ENCODE measurements at regions of chr9 and their contacts with region 1.

Region 1: DNA sequence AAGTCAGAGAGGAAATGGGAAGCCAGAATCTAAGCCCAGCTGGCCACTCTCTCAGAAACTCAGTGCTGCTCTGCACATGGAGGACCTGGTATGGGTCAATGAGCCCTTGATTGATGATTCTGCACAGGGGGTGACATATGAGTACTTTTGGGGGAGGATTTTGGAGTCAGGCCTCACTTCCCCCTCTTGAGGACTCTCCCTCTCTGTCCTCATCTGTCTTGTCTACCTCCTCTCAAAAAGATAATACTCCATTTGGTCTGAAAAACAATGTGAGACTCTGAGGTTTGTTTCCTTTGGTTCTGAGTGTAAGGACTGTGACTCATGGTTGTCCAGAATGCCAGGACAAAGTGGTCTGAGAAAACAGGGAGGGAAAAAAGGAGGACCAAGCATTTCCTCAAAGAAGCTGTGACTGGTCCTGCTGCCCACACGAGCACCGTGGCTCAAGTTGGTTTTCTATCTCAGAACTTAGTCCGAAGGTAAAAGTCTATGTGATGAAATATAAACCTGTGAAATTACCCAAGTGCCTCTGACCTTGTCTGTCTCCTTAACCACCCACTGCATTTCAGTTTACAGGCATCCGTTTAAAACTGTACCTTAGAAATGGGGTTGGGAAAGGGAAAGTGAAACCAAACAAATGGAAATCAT is 11.1 kb downstream of the TTC39B start:
- DNase-seq: peak; percentile 40
- H3K4me3 Mint-ChIP-seq: peak overlapping the region; percentile 63
- H3K27ac Mint-ChIP-seq: peak overlapping the region; percentile 95
- H3K4me1 Mint-ChIP-seq: peaks cover 86% of the 10 kb centered on the region
- H3K27me3 Mint-ChIP-seq: no peaks in the 10 kb centered on the region

Region 2: DNA sequence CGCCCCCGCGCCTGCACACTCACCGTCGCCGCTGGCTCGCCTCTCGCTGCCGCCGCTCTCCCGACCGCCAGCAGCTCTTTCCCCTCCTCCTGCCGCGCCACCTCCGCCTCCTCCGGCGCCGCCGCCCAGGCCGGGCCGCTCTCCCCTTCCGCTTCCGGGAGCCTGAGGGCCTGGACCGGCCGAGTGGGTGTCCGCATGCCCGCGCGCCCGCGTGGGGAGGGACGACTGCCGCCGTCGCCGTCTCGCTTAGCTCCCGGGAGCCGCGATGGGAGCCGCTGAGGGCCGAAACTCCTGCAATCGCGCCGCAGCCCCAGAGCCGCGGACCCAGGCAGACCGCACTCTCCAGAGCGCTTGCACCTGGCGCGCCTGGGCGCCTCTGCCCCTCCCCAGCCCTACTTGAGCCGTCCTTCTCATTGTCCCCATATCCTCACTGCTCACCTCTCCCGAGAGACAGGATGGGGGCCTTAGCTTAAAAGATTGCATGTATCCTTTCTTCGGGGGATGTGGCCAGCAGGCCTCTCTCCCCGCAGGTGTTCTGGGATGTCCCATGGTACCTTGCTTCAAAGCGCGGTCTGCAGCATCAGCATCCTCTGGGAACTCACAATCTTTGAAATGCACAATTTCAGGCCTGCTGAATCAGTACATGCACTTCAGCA is 602.5 kb before region 1 on chr9 and contains the start of gene ZDHHC21:
- CTCF ChIA-PET with region 1: no interaction called
- intact Hi-C with region 1: loop called (anchors 10 kb)
- DNase-seq: peak; percentile 62
- H3K4me3 Mint-ChIP-seq: peak within 1 kb of the TSS; percentile 89
- H3K27ac Mint-ChIP-seq: peak within 1 kb of the TSS; percentile 79
- H3K4me1 Mint-ChIP-seq: peaks cover 31% of the 10 kb centered on the region
- H3K27me3 Mint-ChIP-seq: peaks cover 8% of the 10 kb centered on the region
- total RNA-seq, gene ZDHHC21: 3.5 to 3.8 TPM

Region 3: GRCh38 chr9:14806941-14807520 is 488.9 kb before region 1 on chr9:
- CTCF ChIA-PET with region 1: no interaction called
- intact Hi-C with region 1: no loop called
- DNase-seq: no peak
- H3K4me3 Mint-ChIP-seq: no peak overlapping the region
- H3K27ac Mint-ChIP-seq: no peak overlapping the region
- H3K4me1 Mint-ChIP-seq: no peaks in the 10 kb centered on the region
- H3K27me3 Mint-ChIP-seq: peaks cover 2% of the 10 kb centered on the region

Region 4: DNA sequence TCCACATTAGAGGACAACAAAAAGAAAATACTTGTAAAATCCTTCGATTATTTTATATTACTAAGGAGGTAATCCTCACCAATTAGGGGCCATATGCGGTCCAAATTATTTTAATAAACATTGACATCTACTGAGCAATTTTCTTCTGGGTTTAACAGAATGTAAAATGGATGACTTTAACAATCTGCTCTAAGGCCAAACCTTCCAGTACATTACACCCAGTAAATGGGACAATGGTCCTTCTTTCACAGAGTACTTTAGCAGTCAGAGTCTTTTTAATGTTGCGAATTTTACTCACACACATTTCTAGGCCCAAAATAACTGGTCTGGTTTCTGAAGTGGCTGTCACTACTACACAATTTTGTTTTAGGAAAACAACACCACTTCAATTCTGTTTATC is 95.8 kb before region 1 on chr9:
- CTCF ChIA-PET with region 1: no interaction called
- intact Hi-C with region 1: no loop called
- DNase-seq: no peak
- H3K4me3 Mint-ChIP-seq: no peak overlapping the region
- H3K27ac Mint-ChIP-seq: no peak overlapping the region
- H3K4me1 Mint-ChIP-seq: no peaks in the 10 kb centered on the region
- H3K27me3 Mint-ChIP-seq: no peaks in the 10 kb centered on the region

Region 5: GRCh38 chr9:15211160-15211814 is 84.6 kb before region 1 on chr9:
- CTCF ChIA-PET with region 1: interaction called, 10 read pairs
- intact Hi-C with region 1: no loop called
- DNase-seq: peak; percentile 69
- H3K4me3 Mint-ChIP-seq: no peak overlapping the region
- H3K27ac Mint-ChIP-seq: no peak overlapping the region
- H3K4me1 Mint-ChIP-seq: peaks cover 14% of the 10 kb centered on the region
- H3K27me3 Mint-ChIP-seq: no peaks in the 10 kb centered on the region

Region 6: DNA sequence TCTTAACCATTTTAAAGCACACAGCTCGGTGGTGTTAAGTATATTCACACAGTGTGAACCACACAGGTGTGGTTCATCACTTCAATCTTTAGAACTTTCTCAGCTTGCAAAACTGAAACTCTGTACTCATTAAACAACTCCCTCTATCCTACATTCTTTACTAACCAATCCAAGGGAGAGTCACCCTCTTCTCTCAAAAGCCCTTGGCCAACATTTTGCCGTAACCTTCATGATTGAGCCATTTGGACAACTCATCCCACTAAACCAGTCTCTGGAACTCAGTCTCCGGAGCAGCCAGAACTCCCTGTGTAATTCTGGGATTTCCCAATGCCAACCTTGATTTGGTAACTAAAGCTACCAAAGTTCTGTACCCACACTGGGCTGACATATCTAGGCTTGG is 73.6 kb before region 1 on chr9:
- CTCF ChIA-PET with region 1: no interaction called
- intact Hi-C with region 1: no loop called
- DNase-seq: no peak
- H3K4me3 Mint-ChIP-seq: no peak overlapping the region
- H3K27ac Mint-ChIP-seq: no peak overlapping the region
- H3K4me1 Mint-ChIP-seq: peaks cover 29% of the 10 kb centered on the region
- H3K27me3 Mint-ChIP-seq: no peaks in the 10 kb centered on the region

Region 7: DNA sequence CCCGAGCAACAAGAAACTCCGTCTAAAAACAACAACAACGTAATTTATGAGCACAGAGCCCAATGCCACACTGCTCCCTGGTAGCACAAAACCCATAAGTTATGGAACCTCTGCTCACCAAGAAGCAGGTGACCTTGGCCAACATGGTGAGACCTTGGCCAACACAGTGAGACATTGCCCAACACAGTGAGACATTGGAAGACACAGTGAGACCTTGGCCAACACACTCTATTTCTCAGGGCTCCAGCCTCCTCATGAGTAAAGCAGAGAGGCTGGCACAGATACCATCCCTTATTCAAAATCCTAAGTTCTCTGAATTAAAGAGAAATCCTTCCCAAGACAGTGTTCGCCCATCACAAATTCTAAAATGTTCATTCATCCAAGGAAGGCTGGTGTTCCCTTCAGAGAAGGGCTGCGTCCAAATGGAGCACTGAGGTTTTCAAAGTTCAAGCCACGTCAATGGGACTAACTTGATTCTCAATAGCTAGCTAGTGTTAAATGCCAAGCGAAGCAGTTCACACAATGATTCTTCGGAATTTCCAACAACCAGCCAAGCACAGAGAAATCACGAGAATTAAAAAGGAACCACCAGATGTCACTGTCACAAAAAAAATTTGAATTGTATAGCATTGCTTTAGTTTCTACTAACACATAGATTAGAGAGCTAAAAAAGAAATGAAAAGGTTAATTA is 18.3 kb before region 1 on chr9:
- CTCF ChIA-PET with region 1: interaction called, 3 read pairs
- intact Hi-C with region 1: loop called (anchors 1 kb)
- DNase-seq: no peak
- H3K4me3 Mint-ChIP-seq: no peak overlapping the region
- H3K27ac Mint-ChIP-seq: no peak overlapping the region
- H3K4me1 Mint-ChIP-seq: peaks cover 39% of the 10 kb centered on the region
- H3K27me3 Mint-ChIP-seq: no peaks in the 10 kb centered on the region

Region 8: GRCh38 chr9:15510789-15511575 is 215.1 kb after region 1 on chr9 and contains the start of gene PSIP1:
- CTCF ChIA-PET with region 1: no interaction called
- intact Hi-C with region 1: loop called (anchors 1 kb)
- DNase-seq: peak; percentile 91
- H3K4me3 Mint-ChIP-seq: peak within 1 kb of the TSS; percentile 92
- H3K27ac Mint-ChIP-seq: peak within 1 kb of the TSS; percentile 98
- H3K4me1 Mint-ChIP-seq: peaks cover 51% of the 10 kb centered on the region
- H3K27me3 Mint-ChIP-seq: no peaks in the 10 kb centered on the region
- total RNA-seq, gene PSIP1: 161 to 164 TPM

Region 9: GRCh38 chr9:15552636-15553527 is 257.0 kb after region 1 on chr9 and contains the start of gene CCDC171:
- CTCF ChIA-PET with region 1: interaction called, 3 read pairs
- intact Hi-C with region 1: loop called (anchors 2 kb)
- DNase-seq: peak; percentile 90
- H3K4me3 Mint-ChIP-seq: peak within 1 kb of the TSS; percentile 86
- H3K27ac Mint-ChIP-seq: peak within 1 kb of the TSS; percentile 78
- H3K4me1 Mint-ChIP-seq: peaks cover 5% of the 10 kb centered on the region
- H3K27me3 Mint-ChIP-seq: no peaks in the 10 kb centered on the region
- total RNA-seq, gene CCDC171: 2.0 to 2.7 TPM